ENCODE measurements at regions of chr5 and their contacts with region 1.

Region 1: DNA sequence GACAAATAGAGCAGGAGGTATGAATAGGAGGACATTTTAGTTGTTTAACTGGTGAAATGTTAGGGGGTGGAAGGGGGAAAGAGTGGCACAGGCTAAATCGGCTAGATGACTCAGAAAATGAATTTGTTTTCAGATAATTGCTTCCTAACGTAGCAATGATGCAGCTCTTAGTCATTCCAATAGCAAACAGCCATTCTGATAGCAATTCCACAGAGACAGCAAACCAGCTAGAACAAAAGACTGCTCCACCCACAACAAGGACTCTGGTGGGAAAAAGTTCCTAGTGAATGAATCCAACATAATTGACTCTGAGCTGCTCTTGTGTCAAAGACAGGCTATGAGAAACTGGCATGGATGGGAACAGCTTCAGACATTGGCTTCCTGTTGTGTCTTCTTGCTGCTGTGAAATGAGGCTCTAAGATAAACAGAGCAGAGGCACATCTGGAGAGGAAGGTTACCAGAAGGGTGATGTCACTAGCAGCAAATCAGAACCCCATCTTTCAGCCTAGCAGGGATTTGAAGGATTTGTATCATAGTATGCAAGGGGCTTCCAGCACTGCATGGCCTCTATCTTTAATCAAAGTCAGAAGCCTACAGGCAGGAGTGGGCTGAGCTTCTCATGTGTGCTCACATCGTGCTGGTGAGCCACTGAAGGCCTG is 28.1 kb upstream of the F2RL1 start:
- DNase-seq: peak; percentile 47
- H3K4me3 Mint-ChIP-seq: peak overlapping the region; percentile 28
- H3K27ac Mint-ChIP-seq: peak overlapping the region; percentile 41
- H3K4me1 Mint-ChIP-seq: peaks cover 63% of the 10 kb centered on the region
- H3K27me3 Mint-ChIP-seq: no peaks in the 10 kb centered on the region
- CTCF ChIP-seq: no peak

Region 2: DNA sequence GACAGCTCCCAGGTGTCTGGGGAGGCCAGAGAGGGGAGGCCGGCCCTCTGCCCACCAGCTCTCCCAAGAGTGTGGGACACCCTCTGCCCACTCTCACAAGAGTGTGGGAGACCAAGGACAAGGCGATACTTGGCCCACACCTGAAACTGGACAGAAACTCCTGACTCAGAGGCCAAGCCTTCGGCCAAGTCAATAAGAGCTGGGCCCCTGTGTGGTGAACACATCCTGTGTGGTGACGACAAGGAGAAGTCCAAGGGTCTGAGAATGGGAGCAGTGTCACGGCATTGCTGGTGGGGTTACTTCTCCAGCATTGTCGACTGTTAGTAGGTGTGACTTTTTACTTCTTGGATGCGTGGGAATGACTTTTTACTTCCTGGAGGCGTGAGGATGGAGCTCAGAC is 13.5 kb after region 1 on chr5:
- CTCF ChIA-PET with region 1: interaction called, 11 read pairs
- intact Hi-C with region 1: no loop called
- DNase-seq: peak; percentile 74
- H3K4me3 Mint-ChIP-seq: peak overlapping the region; percentile 39
- H3K27ac Mint-ChIP-seq: peak overlapping the region; percentile 96
- H3K4me1 Mint-ChIP-seq: peaks cover 77% of the 10 kb centered on the region
- H3K27me3 Mint-ChIP-seq: no peaks in the 10 kb centered on the region
- CTCF ChIP-seq: no peak

Region 3: GRCh38 chr5:76838481-76839261 is 47.9 kb after region 1 on chr5:
- CTCF ChIA-PET with region 1: interaction called, 4 read pairs
- intact Hi-C with region 1: loop called (anchors 5 kb)
- DNase-seq: peak; percentile 58
- H3K4me3 Mint-ChIP-seq: peak overlapping the region; percentile 33
- H3K27ac Mint-ChIP-seq: peak overlapping the region; percentile 98
- H3K4me1 Mint-ChIP-seq: peaks cover 46% of the 10 kb centered on the region
- H3K27me3 Mint-ChIP-seq: no peaks in the 10 kb centered on the region
- CTCF ChIP-seq: no peak

Region 4: GRCh38 chr5:77015938-77016569 is 225.3 kb after region 1 on chr5:
- CTCF ChIA-PET with region 1: no interaction called
- intact Hi-C with region 1: loop called (anchors 5 kb)
- DNase-seq: no peak
- H3K4me3 Mint-ChIP-seq: no peak overlapping the region
- H3K27ac Mint-ChIP-seq: no peak overlapping the region
- H3K4me1 Mint-ChIP-seq: no peaks in the 10 kb centered on the region
- H3K27me3 Mint-ChIP-seq: no peaks in the 10 kb centered on the region
- CTCF ChIP-seq: peak; percentile 50